ENCODE measurements at regions of chr7 and their contacts with region 1.

Region 1: DNA sequence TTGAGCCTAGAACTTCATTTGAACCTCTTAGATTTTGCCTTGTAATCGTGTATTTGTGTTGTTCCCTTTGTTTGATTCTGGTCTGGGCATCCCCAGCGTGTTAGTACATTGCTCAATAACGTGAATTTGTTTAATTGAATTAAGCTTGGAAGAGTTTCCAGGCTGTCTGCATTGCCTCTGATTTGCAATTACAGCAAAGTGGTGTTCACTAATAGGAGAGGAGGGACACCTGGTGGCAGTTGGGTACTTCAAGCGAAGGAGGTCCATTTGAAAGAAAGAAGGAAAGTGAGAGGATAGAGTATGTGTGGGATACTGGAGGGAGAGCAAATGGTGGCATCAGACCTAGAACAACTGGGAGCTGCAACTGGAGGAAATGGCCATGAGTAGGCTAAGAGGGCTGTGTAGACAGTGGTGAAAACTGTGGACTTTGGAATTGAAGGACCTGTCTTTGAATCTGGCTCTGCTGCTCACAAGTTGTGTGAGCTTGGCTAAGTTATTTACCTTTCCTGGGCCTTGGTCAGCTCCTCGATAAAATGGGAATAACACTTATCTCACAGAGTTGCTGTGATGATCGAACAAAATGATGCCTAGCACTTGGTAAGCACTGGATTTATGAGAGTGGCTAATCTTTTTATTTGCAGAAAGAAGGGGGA is 15.1 kb downstream of the LSMEM1 start:
- DNase-seq: peak; percentile 79
- H3K4me3 ChIP-seq: no peak overlapping the region
- H3K27ac ChIP-seq: peak overlapping the region in 3 of 4 donors; percentile 24 to 63 (median 53)
- H3K4me1 ChIP-seq: peaks cover 0 to 13% (median 5%) of the 10 kb centered on the region in 4 donors
- H3K27me3 ChIP-seq: no peaks in the 10 kb centered on the region
- CTCF ChIP-seq: peak; percentile 60 to 74 (median 67)
- EP300 ChIP-seq: no peak
- POLR2A ChIP-seq: no peak

Region 2: GRCh38 chr7:111741811-111742240 is 754.1 kb before region 1 on chr7:
- intact Hi-C with region 1: loop called (anchors 5 kb)
- DNase-seq: peak; percentile 72
- H3K4me3 ChIP-seq: no peak overlapping the region
- H3K27ac ChIP-seq: no peak overlapping the region
- H3K4me1 ChIP-seq: no peaks in the 10 kb centered on the region
- H3K27me3 ChIP-seq: no peaks in the 10 kb centered on the region
- CTCF ChIP-seq: peak in 3 of 4 experiments; percentile 49 to 63 (median 57)
- EP300 ChIP-seq: no peak
- POLR2A ChIP-seq: no peak

Region 3: DNA sequence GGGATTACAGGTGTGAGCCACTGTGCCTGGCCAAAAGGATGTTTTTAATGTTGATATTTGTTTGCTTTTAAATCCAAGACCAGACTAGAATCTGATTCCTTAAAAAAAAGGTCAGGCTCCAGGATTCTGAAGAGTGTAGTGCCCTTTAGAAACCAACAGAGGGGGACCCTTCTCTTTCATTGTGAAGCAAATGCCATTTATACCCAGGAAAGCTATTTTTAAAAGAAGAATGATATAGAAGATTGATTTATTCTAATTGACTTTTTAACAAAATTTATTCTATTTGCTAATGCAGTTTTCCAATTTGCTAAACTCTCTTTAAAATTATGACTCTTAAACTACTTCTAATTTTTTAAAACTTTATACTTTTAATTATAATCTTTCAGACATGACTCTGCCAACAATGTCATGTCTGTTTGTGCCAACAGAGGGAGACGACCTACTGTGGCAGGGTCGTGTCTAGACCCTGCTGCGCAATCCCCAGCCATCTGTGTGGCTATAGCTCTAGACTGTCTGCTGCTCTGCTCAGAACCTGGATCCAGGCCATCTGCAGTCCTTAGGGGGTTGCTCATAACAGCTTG is 732.6 kb before region 1 on chr7:
- intact Hi-C with region 1: loop called (anchors 5 kb)
- DNase-seq: no peak
- H3K4me3 ChIP-seq: no peak overlapping the region
- H3K27ac ChIP-seq: no peak overlapping the region
- H3K4me1 ChIP-seq: peaks cover 0 to 16% (median 3%) of the 10 kb centered on the region in 4 donors
- H3K27me3 ChIP-seq: no peaks in the 10 kb centered on the region
- CTCF ChIP-seq: peak in 3 of 4 experiments; percentile 28 to 58 (median 29)
- EP300 ChIP-seq: no peak
- POLR2A ChIP-seq: no peak

Region 4: GRCh38 chr7:111953611-111954010 is 542.3 kb before region 1 on chr7:
- intact Hi-C with region 1: loop called (anchors 10 kb)
- DNase-seq: no peak
- H3K4me3 ChIP-seq: no peak overlapping the region
- H3K27ac ChIP-seq: no peak overlapping the region
- H3K4me1 ChIP-seq: no peaks in the 10 kb centered on the region
- H3K27me3 ChIP-seq: no peaks in the 10 kb centered on the region
- CTCF ChIP-seq: no peak
- EP300 ChIP-seq: no peak
- POLR2A ChIP-seq: no peak

Region 5: GRCh38 chr7:112481833-112482670 is 13.9 kb before region 1 on chr7:
- intact Hi-C with region 1: loop called (anchors 2 kb)
- DNase-seq: peak; percentile 90
- H3K4me3 ChIP-seq: no peak overlapping the region
- H3K27ac ChIP-seq: peak overlapping the region; percentile 68 to 86 (median 75)
- H3K4me1 ChIP-seq: peaks cover 0 to 55% (median 53%) of the 10 kb centered on the region in 4 donors
- H3K27me3 ChIP-seq: no peaks in the 10 kb centered on the region
- CTCF ChIP-seq: no peak
- EP300 ChIP-seq: peak in 3 of 4 donors; percentile 1 to 89 (median 41)
- POLR2A ChIP-seq: no peak

Measured in sigmoid colon (tissue), 7 donors.